H1 (cell line): ENCODE measurements at regions of chr16 and their contacts with region 1.

Region 1: GRCh38 chr16:51048544-51048943 is 102.5 kb downstream of the SALL1 start:
- DNase-seq: no peak
- H3K4me3 ChIP-seq: no peak overlapping the region
- H3K27ac ChIP-seq: no peak overlapping the region
- H3K4me1 ChIP-seq: peaks cover 0 to 3% (median 0%) of the 10 kb centered on the region in 4 experiments; a peak in 1 of 7 replicates
- H3K27me3 ChIP-seq: 0 out of 7 replicates have a peak, but pooled peaks cover 0 to 3% (median 0%) of the 10 kb centered on the region in 4 experiments
- CTCF ChIP-seq: no peak
- EP300 ChIP-seq: no peak
- POLR2A ChIP-seq: no peak
- RAD21 ChIP-seq: no peak

Region 2: DNA sequence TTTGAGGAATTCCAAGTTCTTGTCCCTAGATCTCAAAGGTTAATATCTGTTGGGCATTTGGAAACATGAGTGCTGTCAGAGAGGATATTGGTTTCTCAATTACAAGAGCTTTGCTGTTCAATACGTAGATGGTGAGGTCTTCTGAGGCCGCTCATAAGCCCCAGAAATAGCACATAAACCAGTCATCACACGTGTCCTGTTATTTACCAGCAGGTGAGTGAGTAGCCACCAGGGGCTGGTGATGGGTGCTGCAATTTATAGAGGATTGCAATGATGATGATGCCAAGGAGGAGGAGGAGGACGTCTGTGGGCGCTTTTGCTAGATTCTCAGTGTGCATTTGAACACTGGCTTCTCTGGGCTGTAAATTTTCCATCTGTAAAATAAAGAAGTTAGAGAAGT is 13.5 kb after region 1 on chr16:
- CTCF ChIA-PET with region 1: interaction called, 13 read pairs
- POLR2A ChIA-PET with region 1: no interaction called
- DNase-seq: no peak
- H3K4me3 ChIP-seq: no peak overlapping the region
- H3K27ac ChIP-seq: no peak overlapping the region
- H3K4me1 ChIP-seq: peaks cover 0 to 2% (median 0%) of the 10 kb centered on the region in 4 experiments; a peak in 2 of 7 replicates
- H3K27me3 ChIP-seq: no peaks in the 10 kb centered on the region
- CTCF ChIP-seq: peak in 1 of 3 experiments; percentile 5; a peak in 1 of 4 replicates
- EP300 ChIP-seq: no peak
- POLR2A ChIP-seq: no peak
- RAD21 ChIP-seq: no peak